Mucosa of descending colon (tissue), 3 donors: ENCODE measurements at regions of chr15 and their contacts with region 1.

Region 1: GRCh38 chr15:89416141-89416853 is 80.1 kb downstream of the RHCG start:
- DNase-seq: peak in 2 of 3 donors; percentile 73 to 80
- ATAC-seq: peak; percentile 92
- H3K4me3 ChIP-seq: no peak overlapping the region
- H3K4me1 ChIP-seq: no peaks in the 10 kb centered on the region
- CTCF ChIP-seq: peak; percentile 47

Region 2: GRCh38 chr15:89469424-89470096 is 53.3 kb after region 1 on chr15:
- intact Hi-C with region 1: loop called in 1 of 2 experiments (anchors 5 kb)
- DNase-seq: no peak
- ATAC-seq: no peak
- H3K4me3 ChIP-seq: no peak overlapping the region
- H3K4me1 ChIP-seq: no peaks in the 10 kb centered on the region
- CTCF ChIP-seq: no peak

Region 3: GRCh38 chr15:89794627-89795241 is 378.4 kb after region 1 on chr15:
- intact Hi-C with region 1: no loop called
- DNase-seq: peak in 1 of 3 donors; percentile 17
- ATAC-seq: peak; percentile 53
- H3K4me3 ChIP-seq: no peak overlapping the region
- H3K4me1 ChIP-seq: peaks cover 3% of the 10 kb centered on the region
- CTCF ChIP-seq: no peak